ENCODE measurements at regions of chr2 and their contacts with region 1.

Region 1: DNA sequence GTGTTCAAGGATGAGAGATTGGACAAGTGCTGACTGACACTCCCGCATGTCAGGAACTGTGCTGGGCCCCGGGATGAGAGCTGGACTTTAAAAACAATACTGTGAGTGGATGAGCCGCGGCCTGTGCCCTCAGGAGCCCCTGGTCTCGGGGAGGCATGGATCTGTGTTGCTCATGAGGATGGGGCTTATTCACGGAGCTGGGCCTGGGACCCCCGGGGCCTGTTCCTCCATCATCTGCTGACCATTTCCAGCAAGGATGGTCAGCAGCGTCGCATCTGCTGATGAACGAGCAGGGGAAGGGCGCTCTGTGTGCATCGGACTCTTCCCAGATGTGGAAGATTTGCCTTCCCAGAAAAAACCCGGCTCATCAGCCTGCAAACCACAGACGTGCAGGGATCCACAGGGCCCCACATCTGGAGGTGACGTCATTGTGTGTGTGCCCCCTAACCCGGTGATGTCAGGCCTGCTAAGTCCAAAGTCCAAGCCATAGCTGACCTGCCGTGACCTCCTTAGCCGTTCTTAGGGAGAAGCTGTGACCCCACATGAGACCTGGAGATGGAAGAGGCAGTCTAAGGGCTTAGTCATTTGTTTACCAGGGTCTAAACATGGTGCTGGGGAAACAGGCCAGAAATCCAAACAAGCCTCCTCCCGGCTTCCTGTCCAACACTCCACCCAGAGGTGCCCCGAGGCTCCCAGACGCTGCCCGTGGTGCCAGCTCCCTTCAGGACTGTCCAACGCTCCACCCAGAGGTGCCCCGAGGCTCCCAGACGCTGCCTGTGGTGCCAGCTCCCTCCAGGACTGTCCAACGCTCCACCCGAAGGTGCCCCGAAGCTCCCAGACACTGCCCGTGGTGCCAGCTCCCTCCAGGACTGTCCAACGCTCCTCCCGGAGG is 143.9 kb downstream of the PXDN start:
- DNase-seq: no peak
- H3K4me3 ChIP-seq: no peak overlapping the region
- H3K27ac ChIP-seq: no peak overlapping the region
- H3K4me1 ChIP-seq: no peaks in the 10 kb centered on the region
- H3K27me3 ChIP-seq: no peaks in the 10 kb centered on the region
- CTCF ChIP-seq: no peak

Region 2: DNA sequence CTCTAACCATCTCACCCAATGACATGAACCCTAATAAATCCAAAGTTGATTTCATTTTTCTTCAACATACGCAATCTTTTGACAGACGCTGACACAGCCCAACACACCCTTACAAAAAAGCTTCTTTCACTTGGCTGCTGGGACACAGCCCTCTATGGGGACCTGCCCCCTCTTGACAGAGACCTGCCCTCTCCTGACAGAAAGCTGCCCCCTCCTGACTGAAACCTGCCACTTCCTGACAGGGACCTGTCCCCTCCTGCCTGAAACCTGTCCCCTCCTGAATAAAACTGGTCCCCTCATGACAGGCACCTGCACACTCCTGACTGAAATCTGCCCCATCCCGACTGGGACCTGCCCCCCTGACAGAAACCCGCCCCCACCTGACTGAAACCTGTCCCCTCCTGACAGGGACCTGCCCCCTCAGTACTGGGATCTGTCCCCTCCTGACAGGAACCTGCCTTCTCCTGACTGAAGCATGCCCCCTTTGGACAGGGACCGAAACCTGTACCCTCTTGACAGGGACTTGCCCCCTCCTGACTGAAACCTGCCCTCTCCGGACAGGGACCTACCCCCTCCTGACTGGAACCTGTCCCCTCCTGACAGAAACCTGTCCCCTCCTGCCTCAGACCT is 56.0 kb after region 1 on chr2:
- intact Hi-C with region 1: loop called (anchors 5 kb)
- DNase-seq: no peak
- H3K4me3 ChIP-seq: no peak overlapping the region
- H3K27ac ChIP-seq: no peak overlapping the region
- H3K4me1 ChIP-seq: no peaks in the 10 kb centered on the region
- H3K27me3 ChIP-seq: no peaks in the 10 kb centered on the region
- CTCF ChIP-seq: no peak

Region 3: GRCh38 chr2:1967242-1968208 is 367.1 kb after region 1 on chr2:
- intact Hi-C with region 1: no loop called
- DNase-seq: no peak
- H3K4me3 ChIP-seq: no peak overlapping the region
- H3K27ac ChIP-seq: no peak overlapping the region
- H3K4me1 ChIP-seq: no peaks in the 10 kb centered on the region
- H3K27me3 ChIP-seq: no peaks in the 10 kb centered on the region
- CTCF ChIP-seq: no peak

Region 4: DNA sequence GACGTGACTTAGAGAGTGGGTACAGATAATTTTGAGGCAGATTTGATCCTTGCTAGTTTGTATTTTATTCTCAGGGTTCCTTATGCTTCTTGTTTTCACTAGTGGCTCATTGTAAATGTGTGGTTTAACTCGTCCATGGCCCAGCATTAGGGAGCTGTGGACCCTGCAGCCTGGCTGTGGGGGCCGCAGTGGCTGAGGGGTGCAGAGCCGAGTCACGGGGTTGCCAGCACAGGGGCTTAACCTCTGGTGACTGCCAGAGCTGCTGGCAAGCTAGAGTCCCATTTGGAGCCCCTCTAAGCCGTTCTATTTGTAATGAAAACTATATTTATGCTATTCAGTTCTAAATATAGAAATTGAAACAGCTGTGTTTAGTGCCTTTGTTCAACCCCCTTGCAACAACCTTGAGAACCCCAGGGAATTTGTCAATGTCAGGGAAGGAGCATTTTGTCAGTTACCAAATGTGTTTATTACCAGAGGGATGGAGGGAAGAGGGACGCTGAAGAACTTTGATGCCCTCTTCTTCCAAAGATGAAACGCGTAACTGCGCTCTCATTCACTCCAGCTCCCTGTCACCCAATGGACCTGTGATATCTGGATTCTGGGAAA is 460.8 kb after region 1 on chr2:
- intact Hi-C with region 1: no loop called
- DNase-seq: no peak
- H3K4me3 ChIP-seq: no peak overlapping the region
- H3K27ac ChIP-seq: no peak overlapping the region
- H3K4me1 ChIP-seq: no peaks in the 10 kb centered on the region
- H3K27me3 ChIP-seq: no peaks in the 10 kb centered on the region
- CTCF ChIP-seq: no peak